ENCODE measurements at regions of chr1 and their contacts with region 1.

Region 1: GRCh38 chr1:19844731-19845495 is 29.8 kb upstream of the RNF186 start:
- DNase-seq: no peak
- H3K4me3 ChIP-seq: no peak overlapping the region
- H3K27ac ChIP-seq: no peak overlapping the region
- H3K4me1 ChIP-seq: no peaks in the 10 kb centered on the region
- H3K27me3 ChIP-seq: no peaks in the 10 kb centered on the region
- CTCF ChIP-seq: no peak
- POLR2A ChIP-seq: no peak

Region 2: GRCh38 chr1:20811916-20812315 is 967.0 kb after region 1 on chr1:
- intact Hi-C with region 1: loop called (anchors 10 kb)
- DNase-seq: no peak
- H3K4me3 ChIP-seq: no peak overlapping the region
- H3K27ac ChIP-seq: no peak overlapping the region
- H3K4me1 ChIP-seq: no peaks in the 10 kb centered on the region
- H3K27me3 ChIP-seq: no peaks in the 10 kb centered on the region
- CTCF ChIP-seq: no peak
- POLR2A ChIP-seq: no peak